ENCODE measurements at regions of chr15 and their contacts with region 1.

Region 1: GRCh38 chr15:77013776-77014131 is 18.8 kb downstream of the PSTPIP1 start:
- DNase-seq: no peak
- H3K4me3 ChIP-seq: no peak overlapping the region
- H3K27ac ChIP-seq: peak overlapping the region in 1 of 5 donors; percentile 22
- H3K4me1 ChIP-seq: peaks cover 0 to 4% of the 10 kb centered on the region in 2 donors
- H3K27me3 ChIP-seq: no peaks in the 10 kb centered on the region
- CTCF ChIP-seq: no peak
- POLR2A ChIP-seq: no peak

Region 2: GRCh38 chr15:76954744-76955143 is 59.0 kb before region 1 on chr15:
- intact Hi-C with region 1: no loop called
- DNase-seq: no peak
- H3K4me3 ChIP-seq: no peak overlapping the region
- H3K27ac ChIP-seq: no peak overlapping the region
- H3K4me1 ChIP-seq: peaks cover 0 to 7% of the 10 kb centered on the region in 2 donors
- H3K27me3 ChIP-seq: no peaks in the 10 kb centered on the region
- CTCF ChIP-seq: no peak
- POLR2A ChIP-seq: no peak

Region 3: GRCh38 chr15:77622209-77622933 is 608.6 kb after region 1 on chr15:
- intact Hi-C with region 1: loop called in 1 of 2 experiments (anchors 10 kb)
- DNase-seq: no peak
- H3K4me3 ChIP-seq: no peak overlapping the region
- H3K27ac ChIP-seq: no peak overlapping the region
- H3K4me1 ChIP-seq: no peaks in the 10 kb centered on the region
- H3K27me3 ChIP-seq: no peaks in the 10 kb centered on the region
- CTCF ChIP-seq: no peak
- POLR2A ChIP-seq: no peak

Measured in adrenal gland (tissue), 19 donors.